ENCODE measurements at regions of chr6 and their contacts with region 1.

Region 1: DNA sequence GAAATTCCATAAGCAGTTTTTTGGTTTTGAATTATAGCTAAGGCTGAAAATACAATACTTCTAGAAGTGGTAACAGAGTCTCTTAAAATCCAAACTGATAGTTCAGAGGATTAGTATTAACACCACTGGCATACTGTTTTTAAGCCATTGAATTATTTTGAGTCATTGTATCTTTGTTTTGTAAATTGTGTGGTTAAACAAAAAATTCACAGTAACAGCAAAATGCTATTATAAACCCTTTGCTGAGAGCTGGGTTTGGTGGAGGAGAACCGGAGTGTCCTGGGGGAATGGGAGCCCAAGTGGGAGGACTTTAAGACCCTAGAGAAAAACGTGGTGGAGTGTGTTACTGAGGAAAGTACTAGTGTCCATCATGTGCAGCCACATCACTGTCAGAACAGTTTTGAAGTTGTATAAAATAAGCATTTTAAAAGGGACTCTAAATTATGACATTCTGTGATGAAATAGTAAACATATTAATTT is 125.1 kb downstream of the LRRC1 start:
- DNase-seq: no peak
- H3K4me3 ChIP-seq: no peak overlapping the region
- H3K27ac ChIP-seq: no peak overlapping the region
- H3K4me1 ChIP-seq: peaks cover 13% of the 10 kb centered on the region
- H3K27me3 ChIP-seq: no peaks in the 10 kb centered on the region
- CTCF ChIP-seq: no peak

Region 2: GRCh38 chr6:53956068-53956711 is 36.3 kb after region 1 on chr6:
- CTCF ChIA-PET with region 1: no interaction called
- POLR2A ChIA-PET with region 1: no interaction called
- intact Hi-C with region 1: no loop called
- DNase-seq: peak; percentile 70 to 80
- H3K4me3 ChIP-seq: no peak overlapping the region
- H3K27ac ChIP-seq: no peak overlapping the region
- H3K4me1 ChIP-seq: no peaks in the 10 kb centered on the region
- H3K27me3 ChIP-seq: no peaks in the 10 kb centered on the region
- CTCF ChIP-seq: peak; percentile 88

Region 3: GRCh38 chr6:55141611-55142010 is 1221.7 kb after region 1 on chr6:
- CTCF ChIA-PET with region 1: interaction called, 14 read pairs
- POLR2A ChIA-PET with region 1: no interaction called
- intact Hi-C with region 1: no loop called
- DNase-seq: no peak
- H3K4me3 ChIP-seq: no peak overlapping the region
- H3K27ac ChIP-seq: no peak overlapping the region
- H3K4me1 ChIP-seq: no peaks in the 10 kb centered on the region
- H3K27me3 ChIP-seq: no peaks in the 10 kb centered on the region
- CTCF ChIP-seq: no peak

Measured in PC-9 (cell line).